ENCODE measurements at regions of chr3 and their contacts with region 1.

Region 1: DNA sequence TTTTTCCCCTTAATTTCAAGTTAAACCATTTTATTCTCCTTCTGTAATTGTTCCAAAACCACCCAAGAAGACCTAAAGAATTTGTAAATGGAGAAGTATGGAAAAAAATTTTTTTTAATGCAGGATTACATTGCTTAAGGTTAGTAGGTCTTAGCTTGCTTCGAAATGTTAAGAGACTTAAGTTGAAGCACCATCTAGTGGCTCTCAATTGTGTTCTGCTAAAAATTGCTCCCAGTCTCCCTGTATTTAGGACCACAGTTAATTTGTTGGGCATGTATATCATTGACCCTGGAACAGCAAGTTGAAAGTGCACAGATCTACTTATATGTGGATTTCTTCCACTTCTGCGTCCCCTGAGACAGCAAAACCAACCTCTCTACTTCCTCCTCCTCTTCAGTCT is 32.4 kb downstream of the CD200R1L start:
- DNase-seq: peak; percentile 15 to 68
- H3K4me3 ChIP-seq: no peak overlapping the region
- H3K27ac ChIP-seq: peak overlapping the region; percentile 39
- H3K4me1 ChIP-seq: peaks cover 33% of the 10 kb centered on the region
- H3K27me3 ChIP-seq: no peaks in the 10 kb centered on the region
- CTCF ChIP-seq: peak; percentile 73

Region 2: DNA sequence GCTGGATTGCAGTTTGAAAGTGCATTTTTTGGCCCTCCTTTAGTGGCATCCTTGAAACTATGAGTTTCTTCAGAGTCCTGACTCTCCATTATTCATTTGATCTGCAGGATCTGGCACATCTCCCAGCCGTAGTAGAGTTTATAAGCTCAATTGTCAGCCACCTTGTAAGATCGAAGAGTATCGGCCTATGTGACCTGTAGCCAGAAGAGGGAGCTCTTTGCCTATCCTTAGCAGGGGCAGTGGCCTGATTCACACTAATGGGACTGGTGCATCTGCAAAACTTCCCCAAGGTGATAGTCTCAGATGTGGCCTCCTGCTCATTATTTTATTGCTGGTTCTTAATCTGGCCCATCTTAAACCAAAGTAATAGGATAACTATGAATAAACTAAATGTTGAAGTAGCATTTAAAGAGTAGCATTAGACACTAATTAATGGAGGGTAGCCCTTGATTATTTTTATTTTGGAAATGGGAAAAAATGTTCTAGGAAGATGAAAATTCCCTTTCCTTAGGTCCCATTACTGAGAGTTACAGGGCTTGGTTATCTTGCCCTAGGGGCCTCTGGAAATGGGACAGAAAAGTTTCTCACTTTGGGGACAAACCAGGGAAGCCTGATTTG is 702.4 kb before region 1 on chr3:
- CTCF ChIA-PET with region 1: no interaction called
- POLR2A ChIA-PET with region 1: no interaction called
- intact Hi-C with region 1: loop called (anchors 5 kb)
- DNase-seq: peak; percentile 60 to 70
- H3K4me3 ChIP-seq: no peak overlapping the region
- H3K27ac ChIP-seq: no peak overlapping the region
- H3K4me1 ChIP-seq: peaks cover 6% of the 10 kb centered on the region; the same call in 1 of the 2 replicates
- H3K27me3 ChIP-seq: no peaks in the 10 kb centered on the region
- CTCF ChIP-seq: peak; percentile 97

Region 3: GRCh38 chr3:112676659-112677234 is 137.5 kb before region 1 on chr3:
- CTCF ChIA-PET with region 1: no interaction called
- POLR2A ChIA-PET with region 1: interaction called, 12 read pairs
- intact Hi-C with region 1: loop called (anchors 1 kb)
- DNase-seq: peak; percentile 53 to 86
- H3K4me3 ChIP-seq: no peak overlapping the region
- H3K27ac ChIP-seq: peak overlapping the region; percentile 87
- H3K4me1 ChIP-seq: peaks cover 57% of the 10 kb centered on the region
- H3K27me3 ChIP-seq: no peaks in the 10 kb centered on the region
- CTCF ChIP-seq: no peak

Region 4: DNA sequence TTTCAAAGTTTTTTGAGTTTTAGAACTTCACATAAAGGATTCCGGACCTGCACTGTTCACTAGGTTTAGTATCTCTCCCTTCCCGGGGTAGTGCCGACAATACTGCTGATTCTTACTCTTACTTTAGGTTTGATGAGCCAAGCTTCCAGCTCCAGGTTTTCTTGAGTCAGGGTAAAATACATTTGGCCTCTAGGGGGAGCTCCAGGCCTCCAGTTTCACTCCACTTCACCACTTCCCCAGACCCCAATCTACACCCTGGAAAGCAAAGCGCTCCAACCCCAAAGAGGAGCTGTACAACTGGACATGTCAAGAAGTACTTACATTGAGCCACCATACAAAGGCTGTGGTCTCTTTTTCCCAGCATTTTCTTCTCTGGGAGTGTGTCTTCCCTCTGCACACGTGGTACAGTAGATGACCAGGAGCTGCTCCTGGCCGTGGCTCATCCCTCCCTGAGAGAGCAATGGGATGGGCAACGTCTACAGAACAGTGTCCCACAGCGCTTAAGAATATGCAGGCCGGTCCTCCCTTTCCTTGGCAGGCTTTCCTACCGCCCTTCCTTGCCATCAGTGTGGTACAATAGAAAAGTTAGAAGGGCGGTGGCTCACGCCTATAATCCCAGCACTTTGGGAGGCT is 79.4 kb before region 1 on chr3:
- CTCF ChIA-PET with region 1: interaction called, 27 read pairs
- POLR2A ChIA-PET with region 1: interaction called, 3 read pairs
- intact Hi-C with region 1: loop called (anchors 1 kb)
- DNase-seq: peak; percentile 44 to 63
- H3K4me3 ChIP-seq: no peak overlapping the region
- H3K27ac ChIP-seq: no peak overlapping the region
- H3K4me1 ChIP-seq: peaks cover 58% of the 10 kb centered on the region
- H3K27me3 ChIP-seq: no peaks in the 10 kb centered on the region
- CTCF ChIP-seq: peak; percentile 86

Region 5: GRCh38 chr3:112829031-112829430 is 14.8 kb after region 1 on chr3:
- CTCF ChIA-PET with region 1: no interaction called
- POLR2A ChIA-PET with region 1: no interaction called
- intact Hi-C with region 1: no loop called
- DNase-seq: no peak
- H3K4me3 ChIP-seq: no peak overlapping the region
- H3K27ac ChIP-seq: no peak overlapping the region
- H3K4me1 ChIP-seq: no peaks in the 10 kb centered on the region
- H3K27me3 ChIP-seq: no peaks in the 10 kb centered on the region
- CTCF ChIP-seq: no peak

Region 6: GRCh38 chr3:112990672-112991602 is 176.7 kb after region 1 on chr3 and contains the start of gene GTPBP8:
- CTCF ChIA-PET with region 1: no interaction called
- POLR2A ChIA-PET with region 1: no interaction called
- intact Hi-C with region 1: loop called (anchors 5 kb)
- DNase-seq: peak; percentile 87 to 90
- H3K4me3 ChIP-seq: peak within 1 kb of the TSS; percentile 95
- H3K27ac ChIP-seq: peak within 1 kb of the TSS; percentile 98
- H3K4me1 ChIP-seq: peaks cover 29% of the 10 kb centered on the region
- H3K27me3 ChIP-seq: no peaks in the 10 kb centered on the region
- CTCF ChIP-seq: peak; percentile 25; the same call in 1 of the 2 replicates
- total RNA-seq, gene GTPBP8: 27.9 and 34.3 TPM in 2 replicates

Region 7: DNA sequence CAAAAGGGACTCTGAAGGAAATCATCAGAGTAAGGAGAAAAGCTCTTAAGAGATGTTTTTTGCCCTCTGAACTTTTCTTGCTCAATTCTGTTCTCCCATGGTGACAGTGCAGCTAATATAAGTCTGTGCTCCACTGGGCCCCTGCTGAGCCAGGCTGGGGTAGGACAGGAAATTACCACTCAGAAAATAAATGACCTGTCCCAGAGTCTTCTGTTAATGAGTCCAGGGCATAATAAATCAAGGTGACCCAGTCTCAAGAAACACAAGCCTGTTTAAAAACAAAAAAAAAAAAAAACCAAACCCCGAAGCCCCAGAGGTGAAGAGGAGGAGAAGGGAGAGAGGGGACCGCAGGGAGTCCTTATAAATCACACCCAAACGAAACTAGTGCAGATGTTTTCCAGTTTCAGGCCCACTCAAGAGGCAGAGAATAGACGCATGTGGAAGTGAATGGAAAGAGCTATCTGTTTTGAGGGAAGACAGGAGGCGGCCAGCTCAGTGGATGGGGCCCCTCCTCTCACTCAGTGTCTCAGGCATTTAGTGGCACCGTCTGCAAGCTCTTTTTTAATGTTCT is 337.3 kb after region 1 on chr3:
- CTCF ChIA-PET with region 1: no interaction called
- POLR2A ChIA-PET with region 1: no interaction called
- intact Hi-C with region 1: no loop called
- DNase-seq: no peak
- H3K4me3 ChIP-seq: no peak overlapping the region
- H3K27ac ChIP-seq: no peak overlapping the region
- H3K4me1 ChIP-seq: peaks cover 17% of the 10 kb centered on the region
- H3K27me3 ChIP-seq: no peaks in the 10 kb centered on the region
- CTCF ChIP-seq: no peak

Measured in PC-9 (cell line).